A673 (cell line): ENCODE measurements at regions of chr3 and their contacts with region 1.

Region 1: DNA sequence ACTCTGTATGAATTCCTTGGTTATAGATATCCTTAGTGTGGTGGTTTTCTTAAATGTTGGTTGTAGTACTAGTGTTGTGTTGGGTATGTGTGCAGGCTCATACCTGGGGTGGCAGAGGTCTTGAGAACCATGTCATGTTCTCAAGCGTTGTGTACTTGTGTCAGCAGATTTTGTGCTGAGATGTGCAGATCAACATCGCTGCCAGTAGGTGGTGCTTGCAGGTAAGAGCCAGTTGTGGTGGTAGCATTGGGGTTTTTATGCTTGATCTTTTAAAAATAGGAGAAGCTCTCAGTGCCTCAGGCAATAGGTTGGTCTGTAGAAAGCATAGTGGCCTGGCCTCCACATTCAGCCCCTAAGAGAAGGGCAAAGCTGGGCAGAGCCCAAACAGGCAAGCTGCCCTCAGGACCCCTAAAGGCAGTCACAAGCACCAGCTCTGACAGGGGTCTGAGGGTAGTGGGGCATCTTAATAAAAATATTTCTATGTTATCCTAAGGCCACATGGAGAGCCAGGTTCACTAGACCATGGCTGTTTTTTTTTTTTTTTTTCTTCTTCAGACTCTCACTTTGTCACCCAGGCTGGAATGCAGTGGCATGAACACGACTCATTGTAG is 164.0 kb downstream of the IL20RB start:
- DNase-seq: peak; percentile 52
- H3K4me3 ChIP-seq: no peak overlapping the region
- H3K27ac ChIP-seq: no peak overlapping the region
- H3K4me1 ChIP-seq: no peaks in the 10 kb centered on the region
- H3K27me3 ChIP-seq: peaks cover 27% of the 10 kb centered on the region
- CTCF ChIP-seq: peak; percentile 78

Region 2: GRCh38 chr3:136772709-136773108 is 349.1 kb before region 1 on chr3:
- CTCF ChIA-PET with region 1: no interaction called
- POLR2A ChIA-PET with region 1: no interaction called
- intact Hi-C with region 1: no loop called
- DNase-seq: no peak
- H3K4me3 ChIP-seq: no peak overlapping the region
- H3K27ac ChIP-seq: no peak overlapping the region
- H3K4me1 ChIP-seq: no peaks in the 10 kb centered on the region
- H3K27me3 ChIP-seq: no peaks in the 10 kb centered on the region
- CTCF ChIP-seq: no peak

Region 3: GRCh38 chr3:137148917-137149316 is 27.1 kb after region 1 on chr3:
- CTCF ChIA-PET with region 1: no interaction called
- POLR2A ChIA-PET with region 1: no interaction called
- intact Hi-C with region 1: loop called (anchors 2 kb)
- DNase-seq: no peak
- H3K4me3 ChIP-seq: no peak overlapping the region
- H3K27ac ChIP-seq: no peak overlapping the region
- H3K4me1 ChIP-seq: no peaks in the 10 kb centered on the region
- H3K27me3 ChIP-seq: peaks cover 5% of the 10 kb centered on the region
- CTCF ChIP-seq: no peak

Region 4: GRCh38 chr3:137692803-137693431 is 571.1 kb after region 1 on chr3:
- CTCF ChIA-PET with region 1: interaction called, 3 read pairs
- POLR2A ChIA-PET with region 1: no interaction called
- intact Hi-C with region 1: loop called (anchors 5 kb)
- DNase-seq: peak; percentile 54
- H3K4me3 ChIP-seq: no peak overlapping the region
- H3K27ac ChIP-seq: no peak overlapping the region
- H3K4me1 ChIP-seq: no peaks in the 10 kb centered on the region
- H3K27me3 ChIP-seq: peaks cover 10% of the 10 kb centered on the region
- CTCF ChIP-seq: peak; percentile 74